Dendritic cell treated with granulocyte-macrophage colony-stimulating factor and Interleukin-4, amounts not matched to agents 40 ng/mL and 50 ng/mL, for 4 days (primary cell): ENCODE measurements at regions of chr1 and their contacts with region 1.

Region 1: DNA sequence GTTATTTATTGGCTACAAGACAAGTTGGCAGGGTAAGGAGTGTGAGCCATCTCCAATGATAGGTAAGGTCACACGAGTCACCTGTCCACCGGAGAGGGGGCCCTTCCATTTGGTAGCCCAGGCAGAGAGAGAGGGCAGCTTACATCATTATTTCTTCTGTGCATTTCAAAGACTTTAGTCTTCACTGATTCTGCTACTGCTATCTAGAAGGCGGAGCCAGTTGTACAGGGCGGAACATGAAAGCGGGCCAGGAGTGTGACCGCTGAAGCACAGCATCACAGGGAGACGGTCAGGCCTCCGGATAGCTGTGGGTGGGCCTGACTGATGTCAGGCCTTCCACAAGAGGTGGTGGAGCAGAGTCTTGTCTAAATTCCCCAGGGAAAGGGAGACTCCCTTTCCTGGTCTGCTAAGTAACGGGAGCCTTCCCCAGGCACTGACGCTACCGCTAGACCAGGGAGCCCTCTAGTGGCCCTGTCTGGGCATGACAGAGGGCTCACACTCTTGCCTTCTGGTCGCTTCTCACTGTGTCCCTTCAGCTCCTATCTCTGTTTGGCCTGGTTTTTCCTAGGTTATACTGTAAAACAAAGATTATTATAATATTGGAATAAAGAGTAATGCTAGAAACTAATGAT is 36.7 kb downstream of the ZNF695 start:
- H3K4me3 Mint-ChIP-seq: peak overlapping the region; percentile 64
- H3K27ac Mint-ChIP-seq: no peak overlapping the region
- H3K4me1 Mint-ChIP-seq: peaks cover 11% of the 10 kb centered on the region
- H3K27me3 Mint-ChIP-seq: no peaks in the 10 kb centered on the region

Region 2: GRCh38 chr1:246843876-246844275 is 127.3 kb before region 1 on chr1:
- intact Hi-C with region 1: no loop called
- H3K4me3 Mint-ChIP-seq: no peak overlapping the region
- H3K27ac Mint-ChIP-seq: no peak overlapping the region
- H3K4me1 Mint-ChIP-seq: no peaks in the 10 kb centered on the region
- H3K27me3 Mint-ChIP-seq: no peaks in the 10 kb centered on the region

Region 3: GRCh38 chr1:246907472-246907871 is 63.7 kb before region 1 on chr1:
- intact Hi-C with region 1: loop called (anchors 1 kb)
- H3K4me3 Mint-ChIP-seq: no peak overlapping the region
- H3K27ac Mint-ChIP-seq: no peak overlapping the region
- H3K4me1 Mint-ChIP-seq: peaks cover 6% of the 10 kb centered on the region
- H3K27me3 Mint-ChIP-seq: no peaks in the 10 kb centered on the region

Region 4: GRCh38 chr1:246931549-246932365 is 39.4 kb before region 1 on chr1 and contains the start of gene AHCTF1:
- intact Hi-C with region 1: loop called (anchors 1 kb)
- H3K4me3 Mint-ChIP-seq: peak within 1 kb of the TSS; percentile 97
- H3K27ac Mint-ChIP-seq: peak within 1 kb of the TSS; percentile 98
- H3K4me1 Mint-ChIP-seq: peaks cover 34% of the 10 kb centered on the region
- H3K27me3 Mint-ChIP-seq: no peaks in the 10 kb centered on the region

Region 5: DNA sequence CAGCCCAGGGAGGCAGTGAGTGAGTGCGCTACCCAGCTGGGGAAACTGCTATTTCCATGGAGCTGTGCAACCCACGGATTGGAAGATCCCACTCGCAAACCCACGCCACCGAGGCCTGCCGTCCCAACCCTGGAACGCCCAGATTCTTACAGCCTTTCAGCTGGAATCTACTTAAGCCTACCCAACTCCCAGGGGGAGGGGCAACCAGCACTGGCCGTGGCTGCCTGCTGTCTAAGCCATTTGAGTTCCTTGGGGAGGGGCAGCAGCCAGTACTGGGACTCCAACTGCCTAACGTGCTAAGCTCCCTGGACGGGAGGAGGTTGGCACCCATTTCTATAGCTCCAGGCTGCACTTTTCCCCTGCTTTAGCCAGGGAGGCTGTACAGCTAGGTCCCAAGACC is 160.0 kb after region 1 on chr1:
- intact Hi-C with region 1: no loop called
- H3K4me3 Mint-ChIP-seq: no peak overlapping the region
- H3K27ac Mint-ChIP-seq: no peak overlapping the region
- H3K4me1 Mint-ChIP-seq: peaks cover 8% of the 10 kb centered on the region
- H3K27me3 Mint-ChIP-seq: no peaks in the 10 kb centered on the region

Region 6: DNA sequence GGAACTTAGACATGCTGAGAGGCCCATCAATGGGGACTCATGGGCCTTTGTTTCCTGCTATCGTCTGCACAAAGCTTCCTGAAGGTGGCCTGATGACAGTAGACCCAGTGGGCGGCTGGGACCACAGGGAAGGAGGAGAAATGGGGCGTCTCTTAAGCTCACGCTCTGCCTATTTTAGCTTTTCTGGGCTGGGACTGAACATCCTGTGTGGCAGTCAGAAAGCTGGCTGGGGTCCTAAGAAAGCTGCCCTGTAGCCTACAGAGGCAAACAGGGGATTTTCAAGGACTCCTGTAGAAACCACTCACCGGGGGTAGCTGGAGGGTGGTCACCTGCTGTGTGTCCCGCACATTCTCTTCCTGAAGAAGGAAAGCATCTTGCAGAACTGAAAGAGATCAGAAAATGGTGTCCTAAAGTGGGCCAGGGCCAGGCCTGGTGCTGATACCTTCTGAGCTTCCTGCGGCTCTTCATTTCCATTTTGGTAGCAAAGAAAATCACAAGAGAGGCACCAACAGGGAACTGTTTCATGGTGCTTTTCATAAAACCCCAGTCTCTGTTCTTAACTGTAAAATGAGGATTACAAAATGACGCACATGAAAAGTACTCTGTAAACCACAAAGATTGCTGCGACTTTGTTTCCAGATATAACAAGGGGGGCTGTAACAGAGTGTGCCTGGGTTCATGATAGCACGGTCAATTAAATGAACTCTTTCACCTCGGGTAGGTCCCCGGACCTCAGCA is 351.8 kb after region 1 on chr1:
- intact Hi-C with region 1: no loop called
- H3K4me3 Mint-ChIP-seq: no peak overlapping the region
- H3K27ac Mint-ChIP-seq: peak overlapping the region; percentile 58
- H3K4me1 Mint-ChIP-seq: peaks cover 44% of the 10 kb centered on the region
- H3K27me3 Mint-ChIP-seq: no peaks in the 10 kb centered on the region